Pancreas (tissue), 10 donors: ENCODE measurements at regions of chr2 and their contacts with region 1.

Region 1: GRCh38 chr2:201171259-201171814 is 11.6 kb upstream of the CASP10 start:
- DNase-seq: no peak
- ATAC-seq: no peak
- H3K4me3 ChIP-seq: no peak overlapping the region
- H3K27ac ChIP-seq: no peak overlapping the region
- H3K4me1 ChIP-seq: peaks cover 0 to 3% (median 2%) of the 10 kb centered on the region in 3 donors
- H3K27me3 ChIP-seq: no peaks in the 10 kb centered on the region
- CTCF ChIP-seq: no peak

Region 2: DNA sequence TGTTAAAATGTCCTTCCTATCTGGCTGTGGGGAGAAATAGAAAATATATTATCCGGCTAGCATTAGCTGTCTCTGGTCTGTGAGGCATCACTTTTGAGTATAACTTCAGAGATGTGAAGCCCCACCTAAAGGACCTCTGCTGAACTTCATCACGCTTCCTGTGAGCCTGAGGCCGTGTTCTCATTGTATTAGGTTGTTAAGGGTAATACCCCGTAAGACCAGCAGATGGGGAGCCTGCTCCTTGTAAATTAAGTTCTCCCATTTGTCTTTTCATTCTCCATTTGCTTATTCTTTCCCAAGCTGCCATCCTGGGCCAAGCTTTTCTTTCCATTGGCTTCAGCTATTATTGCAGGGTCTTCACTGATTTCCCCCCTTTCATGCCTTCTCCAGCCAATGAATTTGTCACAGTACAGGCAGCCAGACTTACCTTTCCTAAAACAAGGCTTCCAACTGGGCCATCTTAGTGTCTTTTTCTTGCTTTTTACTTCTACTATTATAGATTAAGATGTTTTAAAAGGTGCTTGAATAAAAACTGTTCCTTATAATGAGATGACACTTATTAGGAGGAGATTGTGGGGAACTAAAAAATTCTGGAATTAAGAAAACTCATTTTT is 269.8 kb before region 1 on chr2:
- intact Hi-C with region 1: loop called in 1 of 3 experiments (anchors 10 kb)
- DNase-seq: peak in 3 of 6 donors; percentile 49 to 67 (median 51)
- ATAC-seq: peak; percentile 68 to 94 (median 92)
- H3K4me3 ChIP-seq: no peak overlapping the region
- H3K27ac ChIP-seq: no peak overlapping the region
- H3K4me1 ChIP-seq: no peaks in the 10 kb centered on the region
- H3K27me3 ChIP-seq: no peaks in the 10 kb centered on the region
- CTCF ChIP-seq: peak; percentile 52 to 66 (median 58)